Head of caudate nucleus (tissue), 42 donors: ENCODE measurements at regions of chr17 and their contacts with region 1.

Region 1: DNA sequence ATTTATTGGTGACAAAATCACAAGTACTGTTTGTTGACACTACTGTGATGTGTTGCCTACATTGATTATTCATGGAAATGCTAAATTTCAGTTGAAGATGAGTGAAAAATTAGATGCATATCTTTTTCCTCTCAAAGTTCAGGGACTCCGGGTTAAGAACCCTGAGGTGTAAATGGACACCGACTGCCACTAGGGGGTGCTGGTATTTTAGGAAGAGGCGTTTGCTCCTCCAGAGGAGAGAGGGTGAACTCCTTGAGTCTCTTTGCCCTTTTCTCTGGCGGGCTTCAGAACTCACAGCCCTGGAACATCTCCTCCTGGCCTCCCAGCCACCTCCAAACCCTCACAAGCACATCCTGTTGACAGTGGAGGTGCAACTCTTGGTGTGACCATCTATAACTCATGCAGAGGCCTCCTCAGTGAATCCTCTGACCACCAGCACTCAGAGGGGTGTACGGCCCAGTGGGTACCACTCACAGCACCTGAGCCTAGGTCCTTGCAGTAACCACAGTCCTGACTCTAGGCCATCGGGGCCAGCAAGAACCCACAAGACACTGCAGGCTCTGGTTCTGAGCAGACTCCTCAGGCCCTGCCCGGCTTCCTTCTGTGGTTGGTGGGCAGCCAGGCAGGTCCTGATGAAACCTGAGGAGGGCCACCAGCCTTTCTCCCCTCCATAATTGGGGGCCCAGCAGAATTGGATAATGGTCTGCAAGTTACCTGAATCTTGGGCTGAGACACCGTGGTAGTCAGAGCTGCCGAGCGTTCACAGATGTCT is 26.2 kb upstream of the PIK3R5 start:
- DNase-seq: peak; percentile 35 to 89 (median 70)

Region 2: DNA sequence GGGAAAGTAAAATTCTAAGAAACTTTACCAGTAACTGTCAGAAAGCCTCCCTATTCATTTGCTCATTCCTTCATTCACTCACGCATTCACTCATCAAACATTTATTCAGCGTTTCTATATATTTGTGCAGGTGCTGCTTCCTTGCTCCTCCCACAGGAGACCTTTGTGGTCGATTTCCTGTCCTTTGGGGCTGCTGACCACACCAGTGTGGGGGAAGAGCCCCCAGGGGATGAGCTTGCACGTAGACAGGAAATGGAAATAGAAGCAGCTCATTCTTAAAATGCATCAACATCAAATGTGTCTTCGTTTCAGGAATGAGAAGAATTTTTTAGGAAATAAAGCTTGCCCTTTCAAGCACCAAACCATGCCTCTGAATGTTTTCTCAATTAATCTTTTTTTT is 133.8 kb before region 1 on chr17:
- intact Hi-C with region 1: no loop called
- DNase-seq: peak in 1 of 42 donors; percentile 16

Region 3: DNA sequence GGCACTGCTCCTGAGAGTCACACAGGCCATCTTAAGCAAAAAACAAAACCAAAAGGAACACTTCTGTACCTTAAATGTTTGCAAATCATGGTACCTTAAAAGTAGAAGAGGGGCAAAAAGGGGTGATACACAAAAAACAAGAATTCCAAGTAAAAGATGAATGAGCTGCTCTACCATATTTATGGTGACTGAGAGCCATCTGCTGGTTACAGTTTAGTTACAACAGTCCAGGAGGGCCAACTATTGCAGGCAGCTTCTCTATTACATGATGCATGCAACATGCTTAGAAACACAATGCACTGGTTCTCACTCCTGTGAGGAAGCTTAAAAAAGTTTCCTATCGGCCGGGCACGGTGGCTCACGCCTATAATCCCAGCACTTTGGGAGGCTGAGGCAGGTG is 530.4 kb after region 1 on chr17:
- intact Hi-C with region 1: loop called (anchors 5 kb)
- DNase-seq: peak in 22 of 42 donors; percentile 8 to 73 (median 40)